Sigmoid colon (tissue), 7 donors: ENCODE measurements at regions of chr5 and their contacts with region 1.

Region 1: GRCh38 chr5:44332285-44332971 is 56.8 kb downstream of the FGF10 start:
- DNase-seq: no peak
- H3K4me3 ChIP-seq: no peak overlapping the region
- H3K27ac ChIP-seq: peak overlapping the region in 2 of 4 donors; percentile 28 to 47
- H3K4me1 ChIP-seq: peaks cover 0 to 7% (median 0%) of the 10 kb centered on the region in 4 donors
- H3K27me3 ChIP-seq: no peaks in the 10 kb centered on the region
- CTCF ChIP-seq: peak in 2 of 4 experiments; percentile 22 to 48
- EP300 ChIP-seq: no peak
- POLR2A ChIP-seq: no peak

Region 2: GRCh38 chr5:43729846-43730478 is 602.5 kb before region 1 on chr5:
- intact Hi-C with region 1: loop called (anchors 5 kb)
- DNase-seq: no peak
- H3K4me3 ChIP-seq: no peak overlapping the region
- H3K27ac ChIP-seq: no peak overlapping the region
- H3K4me1 ChIP-seq: peaks cover 0 to 9% (median 4%) of the 10 kb centered on the region in 4 donors
- H3K27me3 ChIP-seq: no peaks in the 10 kb centered on the region
- CTCF ChIP-seq: peak in 3 of 4 experiments; percentile 11 to 56 (median 51)
- EP300 ChIP-seq: no peak
- POLR2A ChIP-seq: no peak

Region 3: GRCh38 chr5:44389090-44389822 is 56.8 kb after region 1 on chr5 and contains the start of gene FGF10:
- intact Hi-C with region 1: loop called (anchors 10 kb)
- DNase-seq: peak; percentile 79
- H3K4me3 ChIP-seq: peak within 1 kb of the TSS; percentile 57 to 60 (median 59)
- H3K27ac ChIP-seq: peak within 1 kb of the TSS; percentile 63 to 85 (median 81)
- H3K4me1 ChIP-seq: peaks cover 0 to 16% (median 8%) of the 10 kb centered on the region in 4 donors
- H3K27me3 ChIP-seq: no peaks in the 10 kb centered on the region
- CTCF ChIP-seq: no peak
- EP300 ChIP-seq: no peak
- POLR2A ChIP-seq: peak in 1 of 2 donors; percentile 8
- total RNA-seq, gene FGF10: 25.8 to 44.9 (median 27.4) TPM